ENCODE measurements at regions of chr10 and their contacts with region 1.

Region 1: DNA sequence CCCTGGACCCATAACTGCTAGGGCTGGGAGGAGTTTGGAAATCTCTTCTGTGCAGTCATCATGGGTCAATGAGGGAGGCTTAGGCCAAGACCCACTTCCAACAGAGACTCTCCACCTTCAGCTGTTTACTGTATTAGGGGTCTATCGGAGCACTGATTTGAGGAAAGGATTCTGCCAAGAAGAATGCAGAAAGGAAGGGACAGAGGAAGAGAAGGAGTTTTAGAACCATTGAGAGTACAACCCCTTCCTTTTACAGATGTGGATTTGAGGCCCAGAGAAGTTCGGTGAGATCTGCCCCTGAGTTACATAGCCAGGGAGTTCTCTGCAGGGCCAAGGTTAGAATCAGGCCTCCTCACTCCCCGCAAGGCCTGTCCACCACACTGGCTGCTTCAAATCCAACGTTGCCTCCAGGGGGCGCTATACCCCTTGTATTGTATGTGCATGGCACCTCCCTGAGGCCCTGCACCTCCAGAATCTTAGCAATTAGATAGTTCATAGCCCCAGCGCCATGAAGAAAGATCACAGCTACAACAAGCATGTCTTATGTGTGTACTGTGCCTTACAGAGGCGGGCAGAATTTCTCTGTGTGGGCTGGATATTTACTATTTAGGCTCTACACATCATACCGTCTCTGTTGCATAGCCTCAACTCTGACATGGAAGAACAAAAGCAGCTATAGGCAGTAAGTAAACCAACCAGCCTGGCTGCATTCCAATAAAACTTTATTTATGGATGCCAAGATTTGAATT is 246.8 kb downstream of the SKIDA1 start:
- DNase-seq: peak; percentile 97 to 99
- H3K4me3 ChIP-seq: no peak overlapping the region
- H3K27ac ChIP-seq: no peak overlapping the region
- H3K4me1 ChIP-seq: no peaks in the 10 kb centered on the region
- H3K27me3 ChIP-seq: no peaks in the 10 kb centered on the region
- CTCF ChIP-seq: peak; percentile 30 to 89 (median 76)
- POLR2A ChIP-seq: no peak

Region 2: DNA sequence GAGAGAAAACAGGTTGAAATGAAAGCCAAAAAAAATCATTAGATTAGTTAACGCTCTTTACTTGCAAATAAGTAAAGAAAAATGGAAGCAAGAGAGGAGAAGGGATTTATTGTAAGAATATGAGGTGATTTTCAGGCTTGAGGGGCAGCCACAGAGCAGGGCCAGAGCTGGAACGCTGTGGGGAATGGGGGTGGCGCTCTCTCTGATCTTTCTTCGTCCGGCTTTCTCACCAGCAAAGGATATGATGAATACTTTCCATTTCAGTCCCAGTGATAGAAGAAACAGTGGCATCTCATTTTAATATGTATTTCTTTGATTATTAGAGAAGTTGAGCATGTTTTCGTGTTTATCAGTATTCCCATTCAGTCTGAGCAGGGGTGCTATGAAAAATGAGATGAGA is 134.6 kb after region 1 on chr10:
- intact Hi-C with region 1: no loop called
- DNase-seq: no peak
- H3K4me3 ChIP-seq: no peak overlapping the region
- H3K27ac ChIP-seq: no peak overlapping the region
- H3K4me1 ChIP-seq: no peaks in the 10 kb centered on the region
- H3K27me3 ChIP-seq: no peaks in the 10 kb centered on the region
- CTCF ChIP-seq: no peak
- POLR2A ChIP-seq: no peak

Region 3: DNA sequence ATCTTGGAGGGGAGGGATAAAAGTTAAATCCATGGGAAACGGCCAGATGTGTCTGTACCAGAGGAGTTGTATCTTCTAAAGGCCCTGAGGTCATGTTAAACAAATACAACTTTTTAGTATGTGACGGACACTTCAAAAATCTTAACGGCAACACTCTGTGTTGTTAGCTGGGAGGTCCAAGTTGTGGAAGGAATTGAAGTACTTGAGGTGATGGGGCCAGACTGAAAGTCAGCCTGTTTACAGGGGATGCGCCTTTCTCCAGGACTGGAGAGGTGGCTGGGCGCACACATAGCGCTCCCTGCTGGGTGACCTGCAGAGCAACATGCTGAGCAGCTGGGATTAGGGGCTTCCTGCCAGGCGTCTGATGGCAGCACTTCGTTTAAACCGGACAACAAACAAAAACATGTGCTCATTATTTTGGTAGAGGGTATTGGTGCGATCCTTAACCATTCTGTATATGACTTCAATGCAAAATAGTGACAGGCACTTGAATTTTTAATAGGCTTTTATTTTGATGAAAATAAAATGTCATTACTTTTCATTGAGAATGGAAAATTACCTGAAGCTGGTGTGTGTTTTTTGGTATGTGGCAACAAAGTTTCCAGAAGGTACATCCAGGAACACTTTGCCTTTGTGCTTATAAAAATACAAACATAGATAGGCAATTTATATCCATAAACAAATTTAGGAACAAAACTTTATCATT is 453.6 kb after region 1 on chr10:
- intact Hi-C with region 1: loop called (anchors 10 kb)
- DNase-seq: peak; percentile 51 to 63
- H3K4me3 ChIP-seq: no peak overlapping the region
- H3K27ac ChIP-seq: no peak overlapping the region
- H3K4me1 ChIP-seq: peaks cover 3 to 4% of the 10 kb centered on the region in 2 donors
- H3K27me3 ChIP-seq: no peaks in the 10 kb centered on the region
- CTCF ChIP-seq: peak in 5 of 6 experiments; percentile 25 to 71 (median 65)
- POLR2A ChIP-seq: no peak

Region 4: GRCh38 chr10:21959998-21960397 is 681.3 kb after region 1 on chr10:
- intact Hi-C with region 1: loop called (anchors 5 kb)
- DNase-seq: no peak
- H3K4me3 ChIP-seq: no peak overlapping the region
- H3K27ac ChIP-seq: no peak overlapping the region
- H3K4me1 ChIP-seq: no peaks in the 10 kb centered on the region
- H3K27me3 ChIP-seq: no peaks in the 10 kb centered on the region
- CTCF ChIP-seq: no peak
- POLR2A ChIP-seq: no peak